ENCODE measurements at regions of chr6 and their contacts with region 1.

Region 1: GRCh38 chr6:53179961-53180651 is 31.5 kb upstream of the GCM1 start:
- DNase-seq: peak; percentile 35

Region 2: DNA sequence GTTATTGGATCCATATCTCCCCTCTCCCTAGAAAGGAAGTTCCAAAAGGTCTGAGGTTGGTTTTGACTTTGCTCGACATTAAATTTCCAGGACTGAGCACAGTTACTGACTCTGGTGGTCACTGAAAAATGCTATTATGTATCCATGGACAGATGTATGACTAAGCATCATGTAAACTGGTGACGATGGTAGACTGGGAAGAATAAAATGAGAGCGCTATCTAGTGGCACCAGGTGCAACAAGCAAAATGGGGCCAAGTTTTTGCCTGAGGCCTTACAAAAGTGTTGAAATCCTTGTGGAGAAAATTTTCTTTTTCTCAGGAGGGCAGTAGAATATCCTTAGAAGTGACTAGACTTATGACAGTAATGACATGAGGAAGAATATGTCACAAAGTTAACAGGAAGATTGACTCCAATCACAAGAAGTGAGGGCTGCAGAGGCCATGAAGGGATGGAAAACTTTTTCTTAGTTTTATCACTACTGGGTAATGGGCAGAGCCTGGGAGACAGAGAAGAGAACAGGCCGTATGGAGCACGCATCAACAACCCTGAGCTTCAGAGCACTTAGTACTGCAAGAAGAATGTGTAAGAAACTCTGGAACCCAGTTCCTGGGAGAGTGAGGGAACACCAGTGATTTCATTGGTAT is 257.6 kb after region 1 on chr6:
- in situ Hi-C with region 1: loop called (anchors 25 kb)
- DNase-seq: peak; percentile 58

Measured in KBM-7 (cell line).